ENCODE measurements at regions of chr17 and their contacts with region 1.

Region 1: DNA sequence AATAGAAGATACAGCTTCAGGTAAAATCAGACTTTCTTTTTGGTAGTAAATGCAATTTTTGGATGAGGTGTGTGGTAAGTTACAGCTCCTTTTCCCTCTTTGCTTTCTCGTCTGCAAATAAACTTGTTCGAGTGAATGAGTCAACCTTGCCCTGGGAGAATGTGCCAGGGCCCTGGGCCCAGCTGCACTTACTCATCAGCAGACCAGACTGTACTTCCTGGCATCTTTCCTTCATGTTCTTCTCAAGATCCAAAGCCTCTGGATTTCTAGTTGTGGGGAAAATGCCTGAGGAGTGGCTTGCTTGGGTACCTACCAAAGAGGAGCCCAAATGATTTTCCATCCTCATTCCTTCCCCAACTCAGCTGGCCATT is 5.4 kb upstream of the G6PC1 start:
- DNase-seq: no peak
- ATAC-seq: no peak
- H3K4me3 ChIP-seq: peak overlapping the region; percentile 9 to 57 (median 22); a peak in 4 of 6 replicates
- H3K27ac ChIP-seq: peak overlapping the region; percentile 85
- H3K4me1 ChIP-seq: peaks cover 95% of the 10 kb centered on the region
- H3K27me3 ChIP-seq: no peaks in the 10 kb centered on the region
- CTCF ChIP-seq: no peak
- EP300 ChIP-seq: no peak
- POLR2A ChIP-seq: no peak
- RAD21 ChIP-seq: no peak

Region 2: DNA sequence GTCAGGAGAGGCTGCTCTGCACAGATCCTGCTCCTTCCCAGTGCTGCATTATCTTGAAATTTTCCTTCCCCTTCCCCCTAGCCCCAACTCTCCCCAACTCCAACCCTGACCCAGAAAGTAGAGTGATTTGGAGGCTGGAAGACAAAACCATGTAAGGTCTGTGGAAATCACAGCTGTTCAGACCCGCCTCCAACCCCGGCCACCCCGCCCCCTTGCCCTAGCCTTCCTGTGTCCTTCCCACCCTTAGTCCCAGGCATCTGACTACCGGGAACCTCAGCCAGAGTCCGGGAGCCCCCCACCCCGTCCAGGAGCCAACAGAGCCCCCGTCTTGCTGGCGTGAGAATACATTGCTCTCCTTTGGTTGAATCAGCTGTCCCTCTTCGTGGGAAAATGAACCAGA is 44.2 kb before region 1 on chr17 and contains the start of gene AOC3:
- CTCF ChIA-PET with region 1: no interaction called
- POLR2A ChIA-PET with region 1: interaction called, 20 read pairs
- in situ Hi-C with region 1: no loop called
- intact Hi-C with region 1: no loop called
- DNase-seq: peak; percentile 28
- ATAC-seq: peak; percentile 13; the same call in 2 of the 3 replicates
- H3K4me3 ChIP-seq: peak within 1 kb of the TSS in 2 of 3 experiments; percentile 23 to 58; a peak in 2 of 6 replicates
- H3K27ac ChIP-seq: no peak within 1 kb of the TSS
- H3K4me1 ChIP-seq: peaks cover 75% of the 10 kb centered on the region
- H3K27me3 ChIP-seq: no peaks in the 10 kb centered on the region
- CTCF ChIP-seq: no peak
- EP300 ChIP-seq: no peak
- POLR2A ChIP-seq: no peak
- RAD21 ChIP-seq: no peak
- total RNA-seq, gene AOC3: 8.7 and 10.4 TPM in 2 replicates

Region 3: DNA sequence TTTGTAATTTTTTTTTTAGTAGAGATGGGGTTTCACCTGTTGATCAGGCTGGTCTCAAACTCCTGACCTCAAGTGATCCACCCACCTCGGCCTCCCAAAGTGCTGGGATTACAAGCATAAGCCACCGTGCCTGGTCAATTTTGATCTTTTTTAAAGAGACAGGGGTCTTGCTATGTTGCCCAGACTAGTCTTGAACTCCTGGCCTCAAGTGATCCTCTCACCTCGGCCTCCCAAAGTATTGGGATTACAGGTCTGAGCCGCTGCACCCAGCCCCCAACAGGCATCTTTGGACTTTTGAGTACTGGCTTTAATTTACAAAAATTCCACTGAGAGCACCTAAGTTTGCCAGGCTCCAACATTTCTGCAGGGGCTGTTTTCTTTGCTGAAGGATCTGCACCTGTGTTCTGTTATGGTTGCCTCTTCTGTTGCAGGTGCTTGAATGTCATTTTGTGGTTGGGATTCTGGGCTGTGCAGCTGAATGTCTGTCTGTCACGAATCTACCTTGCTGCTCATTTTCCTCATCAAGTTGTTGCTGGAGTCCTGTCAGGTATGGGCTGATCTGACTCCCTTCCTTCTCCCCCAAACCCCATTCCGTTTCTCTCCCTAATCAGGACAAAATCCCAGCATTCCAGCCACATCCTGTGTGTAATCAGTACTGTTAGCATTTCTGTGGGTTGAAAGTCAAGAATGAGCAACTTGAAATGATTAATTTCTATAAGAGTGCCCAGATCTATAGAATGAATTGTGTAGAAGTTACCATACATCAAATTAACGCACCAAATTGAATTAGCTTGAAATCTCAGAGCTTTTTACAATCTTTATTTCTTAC is 13.9 kb after region 1 on chr17:
- CTCF ChIA-PET with region 1: no interaction called
- POLR2A ChIA-PET with region 1: interaction called, 11 read pairs
- in situ Hi-C with region 1: no loop called
- intact Hi-C with region 1: no loop called
- DNase-seq: no peak
- ATAC-seq: no peak
- H3K4me3 ChIP-seq: no peak overlapping the region
- H3K27ac ChIP-seq: peak overlapping the region; percentile 3
- H3K4me1 ChIP-seq: peaks cover 42% of the 10 kb centered on the region
- H3K27me3 ChIP-seq: no peaks in the 10 kb centered on the region; a peak in 1 of 5 replicates
- CTCF ChIP-seq: no peak
- EP300 ChIP-seq: no peak
- POLR2A ChIP-seq: no peak
- RAD21 ChIP-seq: no peak